ENCODE measurements at regions of chr14 and their contacts with region 1.

Region 1: GRCh38 chr14:93959239-93960107 is 16.9 kb downstream of the ASB2 start:
- DNase-seq: no peak
- H3K4me3 ChIP-seq: no peak overlapping the region
- H3K27ac ChIP-seq: peak overlapping the region; percentile 77 to 92 (median 80)
- H3K4me1 ChIP-seq: peaks cover 0 to 93% (median 67%) of the 10 kb centered on the region in 4 donors
- H3K27me3 ChIP-seq: no peaks in the 10 kb centered on the region
- CTCF ChIP-seq: no peak
- EP300 ChIP-seq: no peak
- POLR2A ChIP-seq: no peak

Region 2: GRCh38 chr14:93160353-93160801 is 799.1 kb before region 1 on chr14:
- intact Hi-C with region 1: no loop called
- DNase-seq: no peak
- H3K4me3 ChIP-seq: no peak overlapping the region
- H3K27ac ChIP-seq: no peak overlapping the region
- H3K4me1 ChIP-seq: no peaks in the 10 kb centered on the region
- H3K27me3 ChIP-seq: no peaks in the 10 kb centered on the region
- CTCF ChIP-seq: no peak
- EP300 ChIP-seq: no peak
- POLR2A ChIP-seq: no peak

Region 3: DNA sequence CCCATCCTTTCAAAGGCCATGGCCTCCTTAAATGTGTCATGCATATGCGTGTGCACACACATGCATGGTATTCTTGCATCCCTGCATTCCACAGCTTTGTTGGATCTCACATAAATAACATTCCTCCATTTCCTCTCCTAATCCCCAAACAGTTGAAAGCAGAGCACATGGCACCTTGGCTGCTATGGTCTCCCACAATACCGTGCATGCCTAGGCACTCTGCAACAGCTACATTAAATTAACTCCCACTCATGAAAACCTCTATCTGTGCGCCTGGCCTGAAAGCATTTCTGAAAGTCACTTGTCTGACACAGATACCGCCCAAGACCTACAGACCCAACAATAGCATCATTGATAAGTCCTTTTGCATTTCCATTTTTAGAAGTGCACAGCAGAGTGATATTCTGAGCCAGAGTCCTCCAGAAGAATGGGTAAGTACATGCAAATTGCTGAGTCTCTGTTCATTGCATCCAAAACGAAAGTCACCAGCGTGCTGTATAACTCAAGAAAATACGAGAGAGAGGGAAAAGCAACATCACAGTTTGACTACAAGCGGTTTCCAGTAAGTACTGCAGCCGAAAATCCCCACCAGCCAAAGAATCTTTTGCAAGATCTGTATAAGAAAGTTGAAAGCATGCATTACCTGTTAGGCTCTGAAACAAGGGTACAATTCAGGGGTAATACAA is 16.5 kb after region 1 on chr14:
- intact Hi-C with region 1: loop called (anchors 2 kb)
- DNase-seq: no peak
- H3K4me3 ChIP-seq: peak overlapping the region; percentile 42 to 65 (median 58)
- H3K27ac ChIP-seq: peak overlapping the region; percentile 86 to 93 (median 90)
- H3K4me1 ChIP-seq: peaks cover 0 to 75% (median 54%) of the 10 kb centered on the region in 4 donors
- H3K27me3 ChIP-seq: no peaks in the 10 kb centered on the region
- CTCF ChIP-seq: peak in 3 of 4 experiments; percentile 25 to 51 (median 32)
- EP300 ChIP-seq: no peak
- POLR2A ChIP-seq: no peak

Measured in sigmoid colon (tissue), 7 donors.